Activated B cell treated with CpG ODN at 0.5 μM for 24 hours (primary cell): ENCODE measurements at regions of chr1 and their contacts with region 1.

Region 1: GRCh38 chr1:202745323-202745888 is 35.2 kb upstream of the SYT2 start:
- DNase-seq: no peak
- ATAC-seq: no peak
- H3K4me3 Mint-ChIP-seq: no peak overlapping the region
- H3K27ac Mint-ChIP-seq: no peak overlapping the region
- H3K4me1 Mint-ChIP-seq: no peaks in the 10 kb centered on the region
- H3K27me3 Mint-ChIP-seq: no peaks in the 10 kb centered on the region
- CTCF ChIP-seq: no peak

Region 2: DNA sequence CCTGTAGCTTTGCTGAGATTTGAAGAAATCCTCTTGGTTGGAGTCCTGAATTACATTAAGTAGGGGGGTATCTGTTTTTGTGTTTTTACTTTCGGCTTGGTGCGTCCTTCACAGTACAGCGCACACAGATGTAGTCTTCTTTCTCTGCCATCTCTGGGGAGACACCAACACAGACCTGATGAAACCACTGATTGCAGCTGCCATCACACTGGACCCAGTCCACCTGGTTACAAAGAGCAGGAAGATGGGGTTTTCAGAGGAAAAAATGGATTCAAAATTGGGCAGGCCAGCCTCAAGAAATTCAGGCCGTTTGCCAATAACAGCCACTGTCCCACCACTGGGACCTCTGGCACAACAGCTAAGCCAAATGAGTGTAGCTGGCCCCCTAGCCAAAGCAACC is 16.5 kb before region 1 on chr1:
- CTCF ChIA-PET with region 1: no interaction called
- POLR2A ChIA-PET with region 1: no interaction called
- intact Hi-C with region 1: no loop called
- DNase-seq: no peak
- ATAC-seq: peak; percentile 40
- H3K4me3 Mint-ChIP-seq: no peak overlapping the region
- H3K27ac Mint-ChIP-seq: no peak overlapping the region
- H3K4me1 Mint-ChIP-seq: peaks cover 16% of the 10 kb centered on the region
- H3K27me3 Mint-ChIP-seq: no peaks in the 10 kb centered on the region
- CTCF ChIP-seq: no peak

Region 3: DNA sequence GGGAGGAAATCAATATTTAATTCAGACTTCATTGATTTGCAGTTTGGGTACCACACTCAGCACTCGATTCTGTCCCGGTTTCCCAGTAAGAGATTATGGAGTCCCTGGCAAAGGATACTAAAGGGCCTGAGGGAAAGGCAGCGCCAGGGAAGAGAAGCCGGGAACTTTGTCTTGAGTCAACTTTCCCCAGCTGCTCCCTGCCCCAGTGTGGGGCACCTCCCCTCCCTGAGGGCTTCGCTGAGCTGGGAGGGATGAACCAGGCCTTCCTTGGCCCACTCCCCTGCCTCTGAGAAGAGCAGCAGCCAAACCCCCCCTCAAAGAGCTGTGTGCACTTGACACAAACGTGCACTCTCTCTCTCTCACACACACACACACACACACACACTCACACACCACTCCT is 781.2 kb after region 1 on chr1:
- CTCF ChIA-PET with region 1: no interaction called
- POLR2A ChIA-PET with region 1: no interaction called
- intact Hi-C with region 1: loop called (anchors 5 kb)
- DNase-seq: no peak
- ATAC-seq: no peak
- H3K4me3 Mint-ChIP-seq: no peak overlapping the region
- H3K27ac Mint-ChIP-seq: no peak overlapping the region
- H3K4me1 Mint-ChIP-seq: no peaks in the 10 kb centered on the region
- H3K27me3 Mint-ChIP-seq: no peaks in the 10 kb centered on the region
- CTCF ChIP-seq: no peak